SK-N-SH (cell line): ENCODE measurements at regions of chr10 and their contacts with region 1.

Region 1: DNA sequence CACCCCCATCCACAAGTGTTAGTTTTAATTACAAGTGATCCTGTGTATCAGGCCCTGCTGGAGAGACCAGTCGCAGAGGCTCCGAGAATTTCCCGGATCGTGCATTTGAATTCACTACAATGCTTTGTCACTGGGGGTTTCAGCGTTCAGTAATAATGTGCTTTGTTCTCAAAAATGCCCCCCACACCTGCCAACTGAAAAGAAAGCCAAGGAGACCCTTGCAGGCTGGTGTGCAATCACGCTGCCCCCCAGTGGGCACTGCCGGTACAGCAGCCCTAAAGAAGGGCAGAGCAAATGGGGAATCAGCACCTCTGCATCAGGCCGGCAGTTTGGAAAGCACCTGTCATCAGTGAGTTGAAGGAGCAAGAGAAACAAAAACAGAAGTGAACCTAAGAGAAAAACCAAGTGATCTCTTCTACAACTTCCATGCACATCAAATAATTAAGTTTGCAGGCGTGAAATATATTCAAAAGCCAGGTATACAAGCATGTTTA is 177.6 kb downstream of the PARD3 start:
- DNase-seq: peak; percentile 67
- H3K4me3 ChIP-seq: no peak overlapping the region; a peak in 1 of 4 replicates
- H3K27ac ChIP-seq: peak overlapping the region in 1 of 2 experiments; percentile 27; a peak in 1 of 4 replicates
- H3K4me1 ChIP-seq: peaks cover 0 to 7% of the 10 kb centered on the region in 2 experiments; a peak in 3 of 4 replicates
- H3K27me3 ChIP-seq: no peaks in the 10 kb centered on the region
- CTCF ChIP-seq: peak; percentile 99
- EP300 ChIP-seq: no peak
- RAD21 ChIP-seq: peak; percentile 87

Region 2: GRCh38 chr10:33330543-33331378 is 1306.7 kb before region 1 on chr10:
- CTCF ChIA-PET with region 1: interaction called, 102 read pairs
- POLR2A ChIA-PET with region 1: no interaction called
- DNase-seq: peak; percentile 80
- H3K4me3 ChIP-seq: peak overlapping the region; percentile 90 to 92
- H3K27ac ChIP-seq: peak overlapping the region; percentile 78 to 93
- H3K4me1 ChIP-seq: peaks cover 16 to 17% of the 10 kb centered on the region in 2 experiments
- H3K27me3 ChIP-seq: no peaks in the 10 kb centered on the region
- CTCF ChIP-seq: peak; percentile 96
- EP300 ChIP-seq: no peak
- RAD21 ChIP-seq: peak; percentile 92

Region 3: DNA sequence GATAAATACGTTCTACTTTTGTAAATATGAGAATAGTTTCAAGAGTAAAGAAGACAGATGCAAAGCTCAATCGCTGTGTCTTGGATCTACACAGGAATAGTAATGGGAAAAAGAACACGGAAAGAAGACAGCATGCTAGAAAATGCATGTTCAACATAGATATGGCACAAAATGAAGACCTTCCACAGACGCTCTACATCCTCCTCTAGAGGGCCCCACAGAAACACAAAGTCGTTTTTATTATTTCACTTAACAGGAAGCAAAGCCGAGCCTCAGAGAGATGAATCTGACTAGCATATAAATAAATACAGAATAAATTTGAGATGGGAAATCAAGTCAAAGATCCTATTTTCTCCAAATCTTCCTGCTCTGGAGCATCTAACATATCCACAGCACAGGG is 114.9 kb before region 1 on chr10:
- CTCF ChIA-PET with region 1: interaction called, 13 read pairs
- POLR2A ChIA-PET with region 1: no interaction called
- DNase-seq: peak; percentile 22
- H3K4me3 ChIP-seq: no peak overlapping the region
- H3K27ac ChIP-seq: peak overlapping the region; percentile 2 to 4; a peak in 2 of 4 replicates
- H3K4me1 ChIP-seq: peaks cover 8 to 21% of the 10 kb centered on the region in 2 experiments; a peak in 3 of 4 replicates
- H3K27me3 ChIP-seq: no peaks in the 10 kb centered on the region
- CTCF ChIP-seq: peak; percentile 59
- EP300 ChIP-seq: no peak
- RAD21 ChIP-seq: peak; percentile 68

Region 4: GRCh38 chr10:34655286-34656170 is 18.1 kb after region 1 on chr10:
- CTCF ChIA-PET with region 1: interaction called, 13 read pairs
- POLR2A ChIA-PET with region 1: no interaction called
- DNase-seq: peak; percentile 50
- H3K4me3 ChIP-seq: no peak overlapping the region
- H3K27ac ChIP-seq: no peak overlapping the region
- H3K4me1 ChIP-seq: peaks cover 0 to 12% of the 10 kb centered on the region in 2 experiments; a peak in 2 of 4 replicates
- H3K27me3 ChIP-seq: no peaks in the 10 kb centered on the region
- CTCF ChIP-seq: peak; percentile 85
- EP300 ChIP-seq: no peak
- RAD21 ChIP-seq: peak; percentile 70

Region 5: GRCh38 chr10:34696423-34696822 is 59.0 kb after region 1 on chr10:
- CTCF ChIA-PET with region 1: no interaction called
- POLR2A ChIA-PET with region 1: no interaction called
- DNase-seq: no peak
- H3K4me3 ChIP-seq: no peak overlapping the region
- H3K27ac ChIP-seq: peak overlapping the region in 1 of 2 experiments; percentile 46; a peak in 2 of 4 replicates
- H3K4me1 ChIP-seq: peaks cover 0 to 38% of the 10 kb centered on the region in 2 experiments; a peak in 1 of 4 replicates
- H3K27me3 ChIP-seq: no peaks in the 10 kb centered on the region
- CTCF ChIP-seq: no peak
- EP300 ChIP-seq: peak in 1 of 2 experiments; percentile 52; a peak in 1 of 4 replicates
- RAD21 ChIP-seq: no peak

Region 6: DNA sequence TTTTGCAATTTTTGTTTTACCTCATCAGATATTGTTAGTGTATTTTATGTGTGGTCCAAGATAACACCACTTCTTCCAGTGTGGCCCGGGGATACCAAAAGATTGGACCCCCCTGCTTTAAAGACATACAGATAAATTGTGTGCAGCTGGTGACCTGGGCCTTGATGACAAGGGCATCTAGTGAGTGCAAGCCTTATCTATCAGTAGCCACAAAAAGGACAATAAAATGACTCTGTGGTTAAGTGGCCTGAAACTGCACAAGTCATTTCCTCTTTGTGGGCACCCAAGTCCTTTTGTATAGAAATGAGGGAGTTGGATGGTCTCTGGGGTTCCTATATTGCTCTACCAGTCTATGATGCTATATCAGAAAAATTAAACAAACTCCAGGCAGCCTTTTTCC is 79.5 kb after region 1 on chr10:
- CTCF ChIA-PET with region 1: no interaction called
- POLR2A ChIA-PET with region 1: no interaction called
- DNase-seq: no peak
- H3K4me3 ChIP-seq: no peak overlapping the region
- H3K27ac ChIP-seq: no peak overlapping the region
- H3K4me1 ChIP-seq: peaks cover 9 to 14% of the 10 kb centered on the region in 2 experiments
- H3K27me3 ChIP-seq: no peaks in the 10 kb centered on the region
- CTCF ChIP-seq: no peak
- EP300 ChIP-seq: no peak
- RAD21 ChIP-seq: no peak

Region 7: GRCh38 chr10:34815185-34816084 is 178.0 kb after region 1 on chr10 and contains the start of gene PARD3:
- CTCF ChIA-PET with region 1: no interaction called
- POLR2A ChIA-PET with region 1: no interaction called
- DNase-seq: peak; percentile 95
- H3K4me3 ChIP-seq: peak within 1 kb of the TSS; percentile 85 to 90
- H3K27ac ChIP-seq: peak within 1 kb of the TSS; percentile 64 to 89
- H3K4me1 ChIP-seq: peaks cover 6 to 28% of the 10 kb centered on the region in 2 experiments; a peak in 2 of 4 replicates
- H3K27me3 ChIP-seq: no peaks in the 10 kb centered on the region
- CTCF ChIP-seq: no peak
- EP300 ChIP-seq: no peak
- RAD21 ChIP-seq: no peak
- polyA plus RNA-seq, gene PARD3: 29.4 and 38.9 TPM in 2 replicates